Adrenal gland (tissue), 19 donors: ENCODE measurements at regions of chr4 and their contacts with region 1.

Region 1: GRCh38 chr4:181528570-181529184 is 714.5 kb upstream of the TENM3 start:
- DNase-seq: peak; percentile 67 to 89 (median 79)
- H3K4me3 ChIP-seq: no peak overlapping the region
- H3K27ac ChIP-seq: no peak overlapping the region
- H3K4me1 ChIP-seq: no peaks in the 10 kb centered on the region
- H3K27me3 ChIP-seq: no peaks in the 10 kb centered on the region
- CTCF ChIP-seq: peak; percentile 81 to 90 (median 86)
- POLR2A ChIP-seq: no peak

Region 2: GRCh38 chr4:180664766-180665368 is 863.8 kb before region 1 on chr4:
- intact Hi-C with region 1: loop called in 1 of 2 experiments (anchors 10 kb)
- DNase-seq: peak; percentile 78 to 95 (median 84)
- H3K4me3 ChIP-seq: no peak overlapping the region
- H3K27ac ChIP-seq: no peak overlapping the region
- H3K4me1 ChIP-seq: peaks cover 8 to 12% of the 10 kb centered on the region in 2 donors
- H3K27me3 ChIP-seq: no peaks in the 10 kb centered on the region
- CTCF ChIP-seq: peak; percentile 70 to 83 (median 76)
- POLR2A ChIP-seq: no peak

Region 3: GRCh38 chr4:181143250-181143854 is 385.3 kb before region 1 on chr4:
- intact Hi-C with region 1: loop called (anchors 5 to 10 kb)
- DNase-seq: peak; percentile 64 to 96 (median 86)
- H3K4me3 ChIP-seq: no peak overlapping the region
- H3K27ac ChIP-seq: no peak overlapping the region
- H3K4me1 ChIP-seq: no peaks in the 10 kb centered on the region
- H3K27me3 ChIP-seq: no peaks in the 10 kb centered on the region
- CTCF ChIP-seq: peak; percentile 83 to 98 (median 88)
- POLR2A ChIP-seq: no peak

Region 4: DNA sequence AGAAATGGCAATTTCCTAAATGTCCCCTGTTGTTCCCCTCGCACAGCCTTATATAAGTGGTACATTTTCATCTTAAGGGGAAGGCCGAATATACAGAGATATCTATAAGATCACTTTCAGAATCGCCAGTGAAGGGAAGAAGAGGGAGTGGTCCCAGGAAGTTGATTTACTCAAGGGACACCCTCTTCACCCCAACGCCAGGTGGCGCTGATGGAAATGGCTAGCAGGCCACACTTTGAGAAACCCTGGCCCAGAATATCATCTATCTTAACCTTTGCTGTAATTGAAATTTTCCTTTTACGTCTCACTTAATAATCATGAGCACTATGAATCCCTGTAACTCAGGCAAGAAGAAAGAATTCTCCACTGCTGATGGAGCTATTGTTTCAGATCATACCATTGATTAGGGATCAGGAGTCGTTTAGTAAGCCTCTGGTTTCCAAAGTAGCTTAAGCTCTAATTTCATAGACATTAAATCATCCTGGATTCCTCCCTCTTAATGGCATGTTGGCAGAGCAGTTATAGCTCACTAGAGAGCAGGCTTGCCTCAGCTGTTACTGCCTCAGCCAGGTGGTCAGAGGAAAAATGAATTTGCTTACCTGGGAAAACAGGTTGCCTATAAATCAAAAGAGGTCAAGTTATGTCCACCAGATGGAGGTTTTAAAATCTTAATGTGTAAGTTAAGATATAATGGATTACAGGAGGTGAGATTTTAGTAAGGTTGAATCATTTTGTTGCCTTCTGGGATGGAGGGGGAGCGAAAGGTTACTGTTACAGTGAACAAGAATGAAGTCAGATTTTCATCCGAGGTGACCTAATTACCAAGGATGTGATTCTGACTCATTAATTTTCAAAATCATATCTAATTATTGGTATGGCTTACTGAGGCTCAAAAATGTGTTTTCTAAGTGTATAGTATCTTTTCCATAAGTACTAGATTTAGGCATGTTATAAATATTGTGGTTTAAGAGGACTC is 226.7 kb before region 1 on chr4:
- intact Hi-C with region 1: loop called in 1 of 2 experiments (anchors 5 kb)
- DNase-seq: peak in 1 of 7 donors; percentile 14
- H3K4me3 ChIP-seq: no peak overlapping the region
- H3K27ac ChIP-seq: no peak overlapping the region
- H3K4me1 ChIP-seq: no peaks in the 10 kb centered on the region
- H3K27me3 ChIP-seq: no peaks in the 10 kb centered on the region
- CTCF ChIP-seq: peak in 3 of 6 experiments; percentile 7 to 25 (median 18)
- POLR2A ChIP-seq: no peak

Region 5: DNA sequence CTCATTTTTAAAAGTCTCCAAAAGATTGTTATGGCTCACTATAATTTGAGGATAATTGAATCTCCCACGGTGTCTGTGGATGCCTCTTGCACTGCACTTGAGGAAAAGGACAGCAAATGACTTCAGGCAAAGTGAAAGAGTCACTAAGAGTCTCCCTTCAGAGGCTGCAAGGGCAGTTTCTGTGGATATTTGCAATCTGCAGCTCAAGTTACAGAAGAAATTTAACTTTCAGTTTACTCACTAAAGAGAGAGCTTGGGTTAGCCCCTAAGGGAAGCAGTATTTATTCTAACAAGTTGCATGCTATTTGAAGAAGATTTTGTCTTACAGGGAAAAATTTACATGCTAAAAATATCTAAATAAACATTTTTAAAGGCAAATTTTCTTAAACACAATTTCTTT is 197.5 kb before region 1 on chr4:
- intact Hi-C with region 1: no loop called
- DNase-seq: no peak
- H3K4me3 ChIP-seq: no peak overlapping the region
- H3K27ac ChIP-seq: no peak overlapping the region
- H3K4me1 ChIP-seq: peaks cover 0 to 4% of the 10 kb centered on the region in 2 donors
- H3K27me3 ChIP-seq: no peaks in the 10 kb centered on the region
- CTCF ChIP-seq: no peak
- POLR2A ChIP-seq: no peak